AG04450 (cell line): ENCODE measurements at regions of chr1 and their contacts with region 1.

Region 1: DNA sequence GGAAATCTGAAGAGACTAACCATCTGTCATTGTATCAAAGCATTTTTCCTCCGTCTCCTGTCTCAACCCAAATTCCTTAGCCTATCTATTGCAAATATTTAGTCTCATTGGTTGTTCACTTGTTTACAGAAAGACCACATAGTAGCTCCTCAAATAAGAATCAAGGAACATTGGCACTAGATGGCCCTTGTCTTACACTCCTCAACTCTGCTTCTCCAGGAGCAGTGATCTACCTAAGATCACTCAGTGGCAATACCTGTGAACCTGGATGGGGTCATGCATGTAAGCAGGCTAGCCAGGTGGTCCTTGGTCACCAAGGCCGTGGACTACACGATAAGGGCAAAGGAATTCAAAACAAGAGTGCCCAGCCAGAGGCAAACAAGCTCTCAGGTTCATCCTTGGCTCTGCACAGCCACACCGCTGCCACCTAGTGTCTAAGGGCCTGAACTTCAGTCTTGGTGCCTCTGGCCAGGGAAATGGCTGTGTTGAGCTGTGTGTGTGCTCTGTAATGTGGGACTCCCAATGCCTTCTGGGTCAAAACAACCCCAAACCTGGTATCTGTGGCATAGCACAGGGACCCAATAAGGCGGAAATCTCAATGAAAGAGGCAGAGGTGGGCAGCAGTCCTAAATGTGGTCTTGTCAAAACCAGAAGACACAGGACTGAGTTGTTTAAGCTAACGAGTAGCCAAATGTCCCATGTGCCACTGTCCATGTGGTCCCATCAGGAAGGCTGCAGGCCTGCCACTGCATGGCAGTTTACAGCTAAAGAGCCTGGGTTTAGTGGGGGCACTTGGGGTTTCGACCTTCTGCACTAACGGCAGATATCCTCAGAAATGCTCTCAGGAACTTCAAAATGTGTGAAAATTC is 54.5 kb downstream of the GPR161 start:
- DNase-seq: no peak
- H3K4me3 ChIP-seq: no peak overlapping the region
- H3K27ac ChIP-seq: no peak overlapping the region
- H3K27me3 ChIP-seq: no peaks in the 10 kb centered on the region
- CTCF ChIP-seq: peak; percentile 98

Region 2: DNA sequence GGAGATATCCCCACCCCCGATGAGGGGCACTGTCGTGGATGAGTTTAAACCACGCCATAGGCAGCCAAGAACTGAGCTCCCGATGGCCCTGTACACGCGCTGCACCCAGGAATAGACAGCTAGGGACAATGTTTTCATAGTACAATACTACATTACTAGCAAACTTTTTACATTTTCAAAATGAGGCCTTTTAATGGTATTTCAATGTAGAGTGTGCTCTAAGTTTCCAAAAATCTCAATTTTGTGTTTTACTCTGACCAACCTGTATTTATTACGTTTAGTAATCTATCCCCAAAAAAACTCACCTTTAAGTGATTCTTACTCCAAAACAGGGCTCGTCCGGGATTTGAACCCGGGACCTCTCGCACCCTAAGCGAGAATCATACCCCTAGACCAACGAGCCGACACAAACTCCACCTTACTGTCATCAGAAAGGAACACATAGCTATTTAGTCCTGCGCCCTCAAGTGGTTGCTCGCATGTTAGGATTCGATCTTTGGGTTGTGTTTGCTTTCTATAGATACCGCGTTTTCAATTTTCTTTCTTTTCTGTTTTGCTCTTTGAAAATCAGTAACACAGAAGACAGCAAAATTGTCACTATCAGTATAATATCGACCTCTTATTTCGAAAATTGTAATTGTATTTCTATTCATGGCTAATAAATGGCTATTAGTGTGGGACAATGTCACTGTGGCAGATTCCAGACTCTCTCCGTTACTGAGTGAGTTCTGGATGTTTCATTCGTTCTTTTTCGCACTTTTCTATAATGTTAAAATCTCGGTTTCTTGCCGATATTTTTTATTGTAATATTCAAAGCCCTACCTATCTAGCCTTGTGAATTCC is 366.9 kb before region 1 on chr1:
- CTCF ChIA-PET with region 1: interaction called, 28 read pairs
- POLR2A ChIA-PET with region 1: interaction called, 4 read pairs
- DNase-seq: peak; percentile 77
- H3K4me3 ChIP-seq: peak overlapping the region; percentile 95
- H3K27ac ChIP-seq: peak overlapping the region; percentile 90
- H3K27me3 ChIP-seq: no peaks in the 10 kb centered on the region
- CTCF ChIP-seq: peak; percentile 96

Region 3: DNA sequence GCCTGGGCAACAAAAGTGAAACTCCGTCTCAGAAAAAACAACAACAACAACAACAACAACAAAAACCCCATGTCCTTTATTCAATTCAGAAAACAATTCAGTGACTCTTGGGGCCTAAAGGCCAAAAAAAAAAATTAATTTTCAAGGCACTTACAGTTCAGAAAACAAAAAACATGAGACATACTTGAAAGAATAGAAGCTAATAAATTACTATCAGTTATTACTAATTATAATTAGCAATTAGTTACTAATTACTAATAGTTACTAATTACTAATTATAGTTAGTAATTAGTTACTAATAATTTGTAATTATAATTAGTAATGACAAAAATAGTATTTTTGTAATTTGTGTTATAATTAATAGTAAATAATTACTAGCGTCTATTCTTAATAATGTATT is 88.5 kb before region 1 on chr1:
- CTCF ChIA-PET with region 1: no interaction called
- POLR2A ChIA-PET with region 1: no interaction called
- DNase-seq: no peak
- H3K4me3 ChIP-seq: no peak overlapping the region
- H3K27ac ChIP-seq: no peak overlapping the region
- H3K27me3 ChIP-seq: no peaks in the 10 kb centered on the region
- CTCF ChIP-seq: no peak

Region 4: GRCh38 chr1:168045311-168045710 is 36.9 kb before region 1 on chr1:
- CTCF ChIA-PET with region 1: interaction called, 10 read pairs
- POLR2A ChIA-PET with region 1: no interaction called
- DNase-seq: no peak
- H3K4me3 ChIP-seq: no peak overlapping the region
- H3K27ac ChIP-seq: no peak overlapping the region
- H3K27me3 ChIP-seq: no peaks in the 10 kb centered on the region
- CTCF ChIP-seq: no peak

Region 5: GRCh38 chr1:168092566-168093355 is 10.5 kb after region 1 on chr1:
- CTCF ChIA-PET with region 1: interaction called, 46 read pairs
- POLR2A ChIA-PET with region 1: interaction called, 5 read pairs
- DNase-seq: no peak
- H3K4me3 ChIP-seq: no peak overlapping the region
- H3K27ac ChIP-seq: no peak overlapping the region
- H3K27me3 ChIP-seq: no peaks in the 10 kb centered on the region
- CTCF ChIP-seq: peak; percentile 34; the same call in 1 of the 2 replicates

Region 6: GRCh38 chr1:168121401-168122011 is 39.3 kb after region 1 on chr1:
- CTCF ChIA-PET with region 1: interaction called, 10 read pairs
- POLR2A ChIA-PET with region 1: no interaction called
- DNase-seq: peak; percentile 80
- H3K4me3 ChIP-seq: no peak overlapping the region
- H3K27ac ChIP-seq: peak overlapping the region; percentile 92
- H3K27me3 ChIP-seq: no peaks in the 10 kb centered on the region
- CTCF ChIP-seq: no peak

Region 7: DNA sequence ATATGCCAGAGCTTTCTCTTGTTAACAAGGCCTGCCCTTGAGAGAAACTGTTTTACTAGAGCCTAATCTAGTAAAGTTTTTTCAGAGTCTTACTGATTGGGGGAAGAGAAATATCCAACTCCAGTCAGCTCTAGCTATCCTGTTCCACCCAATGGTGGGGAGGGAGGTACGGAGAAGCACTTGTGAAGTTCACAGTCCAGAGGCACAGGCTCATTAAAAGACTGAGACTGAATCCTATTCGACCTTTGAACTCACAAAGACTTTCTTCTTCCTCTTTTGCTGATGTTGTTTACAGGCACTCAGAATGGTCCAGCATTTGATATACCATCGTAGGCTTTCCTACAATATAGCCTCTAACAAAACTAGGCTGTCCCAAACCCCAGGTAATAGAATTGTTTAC is 128.1 kb after region 1 on chr1:
- CTCF ChIA-PET with region 1: no interaction called
- POLR2A ChIA-PET with region 1: no interaction called
- DNase-seq: no peak
- H3K4me3 ChIP-seq: no peak overlapping the region
- H3K27ac ChIP-seq: no peak overlapping the region
- H3K27me3 ChIP-seq: no peaks in the 10 kb centered on the region
- CTCF ChIP-seq: no peak

Region 8: DNA sequence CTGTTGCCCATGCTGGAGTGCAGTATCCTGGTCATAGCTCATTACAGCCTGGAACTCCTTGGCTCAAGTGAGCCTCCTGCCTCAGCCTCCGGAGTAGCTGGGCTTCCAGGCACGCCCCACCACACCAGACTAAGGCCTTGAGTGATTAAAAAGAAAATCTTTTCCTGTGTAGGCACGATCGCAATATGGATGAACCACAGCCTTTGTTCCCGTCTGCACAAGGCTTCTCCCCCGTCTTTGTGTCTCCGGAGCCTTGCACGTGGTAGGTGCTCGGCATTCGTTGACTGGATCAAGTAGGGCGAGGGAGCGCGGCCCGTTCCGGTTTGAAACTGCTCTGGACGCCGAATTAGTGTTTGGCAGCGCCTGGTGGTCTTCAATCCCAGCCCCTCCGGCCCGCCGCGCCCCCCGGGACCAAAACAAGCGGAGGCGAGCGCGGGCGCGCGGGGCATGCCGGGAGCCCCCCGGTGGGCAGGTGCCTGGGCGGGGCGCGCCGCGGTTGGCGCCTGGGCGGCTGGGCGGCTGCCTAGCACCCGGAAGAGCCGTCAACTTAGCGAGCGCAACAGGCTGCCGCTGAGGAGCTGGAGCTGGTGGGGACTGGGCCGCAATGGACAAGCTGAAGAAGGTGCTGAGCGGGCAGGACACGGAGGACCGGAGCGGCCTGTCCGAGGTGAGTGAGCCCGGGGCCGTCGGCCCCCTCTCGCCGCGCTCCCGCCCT is 143.4 kb after region 1 on chr1 and contains the start of gene SFT2D2:
- CTCF ChIA-PET with region 1: interaction called, 11 read pairs
- POLR2A ChIA-PET with region 1: no interaction called
- DNase-seq: no peak
- H3K4me3 ChIP-seq: peak within 1 kb of the TSS; percentile 81
- H3K27ac ChIP-seq: peak within 1 kb of the TSS; percentile 33
- H3K27me3 ChIP-seq: peaks cover 3% of the 10 kb centered on the region
- CTCF ChIP-seq: no peak
- polyA plus RNA-seq, gene SFT2D2: 24.6 and 28.4 TPM in 2 replicates